ENCODE measurements at regions of chr7 and their contacts with region 1.

Region 1: GRCh38 chr7:73667344-73668102 is at the start of gene VPS37D:
- DNase-seq: peak; percentile 69 to 97
- H3K4me3 ChIP-seq: peak within 1 kb of the TSS; percentile 40; the same call in 1 of the 2 replicates
- H3K27ac ChIP-seq: no peak within 1 kb of the TSS
- H3K4me1 ChIP-seq: 0 out of 2 replicates have a peak, but pooled peaks cover 4% of the 10 kb centered on the region
- H3K27me3 ChIP-seq: no peaks in the 10 kb centered on the region
- CTCF ChIP-seq: peak; percentile 50; the same call in 1 of the 2 replicates
- total RNA-seq, gene VPS37D: 8.3 and 12.4 TPM in 2 replicates

Region 2: GRCh38 chr7:73342645-73343044 is 324.9 kb before region 1 on chr7:
- CTCF ChIA-PET with region 1: interaction called, 11 read pairs
- POLR2A ChIA-PET with region 1: no interaction called
- intact Hi-C with region 1: no loop called
- DNase-seq: no peak
- H3K4me3 ChIP-seq: no peak overlapping the region
- H3K27ac ChIP-seq: no peak overlapping the region
- H3K4me1 ChIP-seq: peaks cover 8% of the 10 kb centered on the region; the same call in 1 of the 2 replicates
- H3K27me3 ChIP-seq: no peaks in the 10 kb centered on the region
- CTCF ChIP-seq: peak; percentile 55

Region 3: DNA sequence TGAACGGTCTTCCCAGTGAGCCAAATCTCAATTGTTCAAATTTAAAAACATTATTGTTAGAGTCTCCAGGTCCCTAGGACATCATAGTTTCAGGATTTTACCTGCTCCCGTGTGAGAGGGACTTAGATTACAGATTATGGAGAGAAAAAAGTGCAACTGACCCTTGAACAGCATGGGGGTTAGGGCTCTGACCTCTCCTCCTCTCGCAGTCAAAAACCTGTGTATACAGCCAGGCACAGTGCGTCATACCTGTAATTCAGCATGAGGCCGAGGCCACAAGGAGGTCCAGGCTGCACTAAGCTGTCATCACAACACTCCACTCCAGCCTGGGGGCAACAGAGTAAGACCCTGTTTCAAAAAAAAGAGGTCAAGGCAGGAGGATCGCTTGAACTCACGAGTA is 170.9 kb before region 1 on chr7:
- CTCF ChIA-PET with region 1: no interaction called
- POLR2A ChIA-PET with region 1: no interaction called
- intact Hi-C with region 1: no loop called
- DNase-seq: no peak
- H3K4me3 ChIP-seq: no peak overlapping the region
- H3K27ac ChIP-seq: no peak overlapping the region
- H3K4me1 ChIP-seq: no peaks in the 10 kb centered on the region
- H3K27me3 ChIP-seq: no peaks in the 10 kb centered on the region
- CTCF ChIP-seq: no peak

Region 4: DNA sequence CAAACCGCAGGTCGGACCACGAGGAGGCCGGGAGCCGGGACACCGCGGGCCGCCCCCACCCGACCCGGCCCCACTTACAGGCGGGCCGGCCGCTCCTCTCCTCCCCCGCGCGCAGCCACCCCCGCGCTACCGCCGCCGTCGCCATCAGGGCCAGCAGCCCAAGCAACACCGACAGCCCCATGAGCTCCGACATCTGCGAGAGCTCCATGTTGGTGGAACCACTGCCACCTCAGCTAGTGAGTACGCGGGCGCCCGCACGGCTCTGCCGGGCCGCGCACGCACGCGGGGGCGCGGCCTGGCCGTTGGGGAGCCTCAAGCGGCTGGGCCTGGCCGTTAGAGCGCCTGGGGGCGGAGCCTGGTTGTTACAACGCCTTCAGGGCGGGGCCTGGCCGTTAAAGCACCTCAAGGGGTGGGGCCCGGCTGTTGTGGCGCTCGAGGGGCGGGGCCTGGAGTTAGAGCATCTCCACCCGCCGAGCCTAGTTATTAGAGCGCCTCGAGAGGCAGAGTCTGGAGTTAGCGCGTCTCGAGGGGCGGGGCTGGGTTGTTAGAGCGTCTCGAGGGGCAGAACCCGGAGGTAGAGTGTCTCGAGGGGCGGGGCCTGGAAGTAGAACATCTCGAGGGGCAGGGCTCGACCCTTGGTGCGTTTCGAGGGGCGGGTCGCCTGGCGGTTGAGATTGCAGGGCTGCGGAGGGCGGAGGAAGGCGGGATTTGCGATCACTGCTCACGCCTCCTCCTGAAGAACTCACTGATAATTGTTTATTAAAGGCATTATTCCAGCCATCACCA is 89.0 kb before region 1 on chr7 and contains the start of gene TBL2:
- CTCF ChIA-PET with region 1: interaction called, 14 read pairs
- POLR2A ChIA-PET with region 1: no interaction called
- intact Hi-C with region 1: no loop called
- DNase-seq: peak; percentile 95 to 99
- H3K4me3 ChIP-seq: peak within 1 kb of the TSS; percentile 96
- H3K27ac ChIP-seq: peak within 1 kb of the TSS; percentile 73
- H3K4me1 ChIP-seq: peaks cover 16% of the 10 kb centered on the region
- H3K27me3 ChIP-seq: no peaks in the 10 kb centered on the region
- CTCF ChIP-seq: no peak
- total RNA-seq, gene TBL2: 43.9 and 49.2 TPM in 2 replicates

Region 5: DNA sequence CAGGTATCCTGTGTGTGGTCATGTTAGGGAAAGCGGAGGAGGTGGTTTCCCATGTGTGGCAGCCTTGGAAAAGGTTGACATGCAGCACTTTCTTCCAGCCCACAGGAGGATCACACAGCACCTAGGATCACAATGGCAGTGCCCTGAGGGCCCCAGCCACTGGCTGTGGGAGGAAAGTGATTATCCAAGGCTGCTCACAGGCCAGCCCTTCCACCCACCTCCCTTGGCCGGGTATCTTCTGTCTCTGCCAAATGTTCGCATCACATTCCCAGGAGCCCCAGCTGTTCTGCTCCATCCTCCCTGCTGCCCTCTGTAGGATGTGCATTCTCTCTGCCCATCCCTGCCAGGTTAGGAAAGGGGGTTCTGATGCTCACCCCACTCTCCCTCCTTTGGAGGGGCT is 40.7 kb before region 1 on chr7:
- CTCF ChIA-PET with region 1: interaction called, 13 read pairs
- POLR2A ChIA-PET with region 1: interaction called, 4 read pairs
- intact Hi-C with region 1: loop called (anchors 5 kb)
- DNase-seq: peak in 1 of 2 experiments; percentile 26
- H3K4me3 ChIP-seq: no peak overlapping the region
- H3K27ac ChIP-seq: no peak overlapping the region
- H3K4me1 ChIP-seq: 0 out of 2 replicates have a peak, but pooled peaks cover 5% of the 10 kb centered on the region
- H3K27me3 ChIP-seq: no peaks in the 10 kb centered on the region
- CTCF ChIP-seq: no peak

Region 6: DNA sequence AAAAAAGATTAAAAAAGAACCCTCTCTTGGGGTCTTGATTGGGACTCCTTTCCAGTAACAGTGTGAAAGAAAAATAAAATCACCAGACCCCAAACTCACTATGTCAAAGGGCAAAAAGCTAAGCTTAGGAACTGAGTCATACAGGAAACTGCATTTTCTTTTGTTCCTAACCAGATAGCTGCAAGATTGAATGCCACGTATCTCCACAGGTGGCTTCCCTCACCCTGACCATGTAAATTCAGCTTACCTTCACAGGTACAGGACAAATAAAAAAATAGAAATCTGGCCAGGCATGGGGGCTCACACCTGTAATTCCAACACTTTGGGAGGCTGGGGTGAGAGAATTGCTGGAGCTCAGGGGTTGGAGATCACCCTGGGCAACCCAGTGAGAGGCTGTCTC is 474.2 kb after region 1 on chr7:
- CTCF ChIA-PET with region 1: interaction called, 10 read pairs
- POLR2A ChIA-PET with region 1: no interaction called
- intact Hi-C with region 1: no loop called
- DNase-seq: peak; percentile 38 to 89
- H3K4me3 ChIP-seq: peak overlapping the region; percentile 20; the same call in 1 of the 2 replicates
- H3K27ac ChIP-seq: peak overlapping the region; percentile 100
- H3K4me1 ChIP-seq: peaks cover 30% of the 10 kb centered on the region
- H3K27me3 ChIP-seq: no peaks in the 10 kb centered on the region
- CTCF ChIP-seq: no peak